ENCODE measurements at regions of chr17 and their contacts with region 1.

Region 1: GRCh38 chr17:35879773-35880654 is at the start of gene CCL5:
- DNase-seq: peak; percentile 83
- ATAC-seq: peak; percentile 80
- H3K4me3 Mint-ChIP-seq: peak within 1 kb of the TSS; percentile 90
- H3K27ac Mint-ChIP-seq: peak within 1 kb of the TSS; percentile 96
- H3K4me1 Mint-ChIP-seq: peaks cover 65% of the 10 kb centered on the region
- H3K27me3 Mint-ChIP-seq: no peaks in the 10 kb centered on the region
- total RNA-seq, gene CCL5: 275 to 301 TPM

Region 2: GRCh38 chr17:35889818-35890763 is 10.1 kb after region 1 on chr17:
- CTCF ChIA-PET with region 1: interaction called, 17 read pairs
- POLR2A ChIA-PET with region 1: interaction called, 121 read pairs
- DNase-seq: no peak
- ATAC-seq: no peak
- H3K4me3 Mint-ChIP-seq: peak overlapping the region; percentile 42
- H3K27ac Mint-ChIP-seq: peak overlapping the region; percentile 83
- H3K4me1 Mint-ChIP-seq: peaks cover 77% of the 10 kb centered on the region
- H3K27me3 Mint-ChIP-seq: no peaks in the 10 kb centered on the region

Region 3: DNA sequence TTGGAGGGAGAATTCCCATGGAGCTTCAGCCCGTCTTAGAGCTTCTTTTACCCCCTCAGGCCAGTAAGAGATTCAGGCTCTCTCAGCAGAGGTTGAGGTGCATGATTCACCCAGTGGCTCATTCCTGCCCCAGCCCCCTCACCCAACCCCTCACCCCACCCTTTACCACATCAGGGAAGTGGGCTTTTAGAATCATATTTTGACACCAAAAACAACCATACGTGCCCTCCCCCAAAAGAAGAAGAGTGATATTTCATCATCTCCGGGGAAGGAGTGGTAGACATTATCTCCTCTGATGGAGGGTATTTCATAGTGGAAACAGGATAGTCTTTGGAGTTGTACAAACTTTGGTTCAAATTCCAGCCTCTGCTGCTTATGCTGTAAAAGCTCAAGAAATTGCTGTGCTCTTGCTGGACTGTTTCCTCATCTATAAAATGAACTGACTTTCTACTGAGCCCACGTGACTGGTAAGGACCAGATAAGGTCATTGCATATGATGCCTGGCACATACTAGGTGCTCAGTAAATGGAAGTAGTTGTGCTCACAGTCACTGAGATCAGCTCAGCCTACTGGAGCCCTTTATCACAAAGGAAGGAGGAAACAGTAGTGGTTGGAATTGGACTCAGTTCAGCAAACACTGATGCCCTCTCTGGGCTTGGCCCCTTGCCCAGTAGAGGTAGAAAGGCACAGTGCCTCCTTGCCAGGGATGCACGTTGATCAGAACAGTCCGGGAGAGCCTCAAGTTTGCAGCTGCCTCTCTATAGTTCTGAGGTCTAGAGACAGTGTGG is 18.5 kb after region 1 on chr17:
- CTCF ChIA-PET with region 1: interaction called, 10 read pairs
- POLR2A ChIA-PET with region 1: interaction called, 121 read pairs
- DNase-seq: peak; percentile 78
- ATAC-seq: peak; percentile 37
- H3K4me3 Mint-ChIP-seq: peak overlapping the region; percentile 43
- H3K27ac Mint-ChIP-seq: peak overlapping the region; percentile 77
- H3K4me1 Mint-ChIP-seq: peaks cover 84% of the 10 kb centered on the region
- H3K27me3 Mint-ChIP-seq: no peaks in the 10 kb centered on the region

Region 4: DNA sequence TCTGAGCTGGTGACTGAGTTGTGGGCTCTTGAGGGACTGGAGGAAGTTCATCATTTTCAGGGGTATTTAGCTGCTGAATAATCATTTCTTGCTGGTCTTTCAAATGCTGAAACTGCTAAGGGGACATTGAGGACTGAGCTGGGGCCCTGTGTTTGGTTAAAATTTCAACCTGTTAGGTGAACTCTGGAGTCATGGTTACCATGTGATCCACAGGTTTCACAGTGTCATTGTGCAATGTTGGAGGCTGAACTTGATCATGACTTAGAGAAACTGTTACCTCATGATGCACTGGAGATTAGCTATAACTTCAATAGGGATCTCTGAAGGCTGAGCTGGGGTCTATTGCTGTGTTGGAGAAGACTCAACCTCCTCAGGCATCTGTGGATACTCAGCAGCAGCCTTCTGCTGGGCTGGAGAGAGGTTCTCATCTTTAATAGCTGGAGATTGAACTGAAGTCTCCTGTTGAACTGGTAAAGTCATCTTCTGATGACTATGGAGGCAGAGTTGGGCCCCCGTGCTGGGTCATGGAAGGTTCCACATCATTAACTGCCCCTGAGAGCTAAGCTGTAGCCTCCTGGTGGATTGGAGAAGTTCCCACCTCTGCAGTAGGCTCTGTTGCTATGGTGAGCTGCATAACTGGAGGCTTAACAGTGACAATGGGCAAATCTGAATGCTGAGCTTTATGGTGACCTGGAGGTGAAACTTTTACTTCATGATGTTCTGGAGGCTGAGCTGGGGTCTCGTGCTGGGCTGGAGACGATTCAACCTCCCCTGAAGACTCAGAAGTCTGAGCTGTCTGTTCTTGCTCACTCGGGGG is 35.3 kb after region 1 on chr17:
- CTCF ChIA-PET with region 1: interaction called, 5 read pairs
- POLR2A ChIA-PET with region 1: interaction called, 11 read pairs
- DNase-seq: no peak
- ATAC-seq: no peak
- H3K4me3 Mint-ChIP-seq: no peak overlapping the region
- H3K27ac Mint-ChIP-seq: no peak overlapping the region
- H3K4me1 Mint-ChIP-seq: peaks cover 46% of the 10 kb centered on the region
- H3K27me3 Mint-ChIP-seq: no peaks in the 10 kb centered on the region

Region 5: GRCh38 chr17:35930211-35931065 is 50.4 kb after region 1 on chr17 and contains the start of gene RDM1:
- CTCF ChIA-PET with region 1: interaction called, 4 read pairs
- POLR2A ChIA-PET with region 1: interaction called, 14 read pairs
- DNase-seq: peak; percentile 94
- ATAC-seq: peak; percentile 98
- H3K4me3 Mint-ChIP-seq: peak within 1 kb of the TSS; percentile 86
- H3K27ac Mint-ChIP-seq: peak within 1 kb of the TSS; percentile 85
- H3K4me1 Mint-ChIP-seq: peaks cover 37% of the 10 kb centered on the region
- H3K27me3 Mint-ChIP-seq: peaks cover 8% of the 10 kb centered on the region
- total RNA-seq, gene RDM1: 13.9 to 14.4 TPM